Heart right ventricle (tissue), 16 donors: ENCODE measurements at regions of chr2 and their contacts with region 1.

Region 1: GRCh38 chr2:147888680-147889079 is 43.9 kb downstream of the ACVR2A start:
- DNase-seq: no peak
- ATAC-seq: no peak
- H3K4me3 ChIP-seq: no peak overlapping the region
- H3K27ac ChIP-seq: no peak overlapping the region
- H3K4me1 ChIP-seq: peaks cover 0 to 35% (median 17%) of the 10 kb centered on the region in 9 donors
- H3K27me3 ChIP-seq: no peaks in the 10 kb centered on the region
- CTCF ChIP-seq: no peak

Region 2: DNA sequence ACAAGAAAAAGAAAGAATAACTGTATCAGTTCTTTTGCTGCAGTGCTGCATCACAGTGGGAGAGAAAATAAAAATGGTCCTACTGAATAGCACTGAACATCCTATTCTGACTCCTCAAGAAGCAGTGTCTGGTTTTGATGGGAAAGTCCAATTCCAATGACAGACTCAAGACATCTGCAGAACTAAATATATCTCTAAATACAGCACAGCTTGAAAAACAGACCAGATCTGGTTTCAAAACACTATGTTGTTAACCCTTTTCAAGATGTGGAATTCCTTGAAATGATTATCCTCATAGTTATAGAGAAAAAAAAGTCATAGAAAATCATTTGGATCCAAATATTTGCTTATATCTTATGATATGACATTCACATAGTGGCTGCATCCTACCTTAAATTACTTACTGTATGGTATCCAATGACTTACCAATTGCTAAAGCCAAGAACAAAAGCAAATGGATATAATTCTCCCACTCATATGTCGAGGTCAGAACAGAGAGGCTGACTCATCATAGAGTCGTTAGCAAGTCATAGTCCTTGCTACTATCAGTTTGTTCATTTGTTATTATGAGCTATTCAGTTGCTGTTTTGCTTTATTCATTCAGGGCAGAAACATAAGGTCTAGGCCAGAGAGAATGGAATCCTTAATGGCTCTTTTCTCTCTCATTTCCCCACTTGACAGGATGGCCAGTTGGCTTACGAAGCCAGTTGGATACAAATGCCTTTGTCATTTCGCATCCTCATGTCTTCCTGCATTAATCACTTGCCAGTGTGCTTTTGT is 106.3 kb before region 1 on chr2:
- intact Hi-C with region 1: no loop called
- DNase-seq: no peak
- ATAC-seq: no peak
- H3K4me3 ChIP-seq: no peak overlapping the region
- H3K27ac ChIP-seq: no peak overlapping the region
- H3K4me1 ChIP-seq: no peaks in the 10 kb centered on the region
- H3K27me3 ChIP-seq: no peaks in the 10 kb centered on the region
- CTCF ChIP-seq: no peak

Region 3: GRCh38 chr2:147843864-147844696 is 44.6 kb before region 1 on chr2:
- intact Hi-C with region 1: loop called in 2 of 10 experiments (anchors 10 kb)
- DNase-seq: peak; percentile 92 to 94
- ATAC-seq: peak; percentile 92 to 98 (median 96)
- H3K4me3 ChIP-seq: peak overlapping the region; percentile 73 to 92 (median 84)
- H3K27ac ChIP-seq: peak overlapping the region; percentile 91 to 99 (median 97)
- H3K4me1 ChIP-seq: peaks cover 0 to 47% (median 32%) of the 10 kb centered on the region in 9 donors
- H3K27me3 ChIP-seq: peaks cover 0 to 9% (median 0%) of the 10 kb centered on the region in 7 donors
- CTCF ChIP-seq: peak in 6 of 9 donors; percentile 4 to 52 (median 42)

Region 4: DNA sequence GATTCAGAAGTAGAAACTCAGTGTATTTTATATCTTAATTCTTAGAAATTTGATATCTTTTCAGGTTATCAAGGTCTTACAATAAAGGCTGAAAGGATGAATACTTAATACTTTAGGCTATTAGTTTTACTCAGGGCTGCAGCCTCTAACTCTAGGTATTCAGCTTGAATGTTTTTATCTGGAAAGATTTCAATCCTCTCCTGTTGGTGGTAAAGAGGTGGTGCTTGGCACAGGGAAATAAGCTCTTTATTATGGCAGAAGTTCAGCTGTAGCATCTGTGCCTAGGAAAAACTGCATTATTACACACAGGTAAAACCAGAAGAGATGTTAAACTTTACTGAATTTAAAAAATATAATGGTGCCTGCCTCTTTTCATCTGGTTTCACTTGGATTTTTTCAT is 32.7 kb before region 1 on chr2:
- intact Hi-C with region 1: loop called in 1 of 10 experiments (anchors 5 kb)
- DNase-seq: no peak
- ATAC-seq: no peak
- H3K4me3 ChIP-seq: no peak overlapping the region
- H3K27ac ChIP-seq: no peak overlapping the region
- H3K4me1 ChIP-seq: peaks cover 0 to 67% (median 37%) of the 10 kb centered on the region in 9 donors
- H3K27me3 ChIP-seq: no peaks in the 10 kb centered on the region
- CTCF ChIP-seq: no peak

Region 5: DNA sequence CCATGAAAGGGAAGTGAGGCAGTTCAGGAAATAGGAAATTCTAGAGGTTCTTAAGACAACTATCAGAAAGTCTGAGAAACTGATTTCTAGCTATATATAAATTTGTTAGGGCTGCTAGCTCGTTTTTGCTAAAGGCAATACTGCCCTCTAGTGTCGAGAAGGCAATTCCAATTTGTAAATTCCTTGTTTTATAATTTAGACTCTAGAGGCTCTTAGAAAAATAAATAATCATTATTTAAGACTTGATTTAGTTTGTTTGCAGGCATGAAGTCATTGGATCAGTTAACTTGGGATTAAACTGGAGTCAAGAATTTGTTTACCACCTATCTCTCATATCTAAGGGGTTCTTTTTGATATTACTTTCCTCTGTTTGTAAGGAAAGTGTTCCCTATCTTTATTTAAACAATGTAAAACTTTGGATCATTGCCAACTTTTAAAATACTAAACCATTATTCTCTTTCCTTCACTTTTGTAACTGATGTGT is 22.4 kb after region 1 on chr2:
- intact Hi-C with region 1: no loop called
- DNase-seq: peak in 1 of 2 donors; percentile 47
- ATAC-seq: peak in 4 of 8 donors; percentile 20 to 49 (median 39)
- H3K4me3 ChIP-seq: no peak overlapping the region
- H3K27ac ChIP-seq: peak overlapping the region in 1 of 10 donors; percentile 23
- H3K4me1 ChIP-seq: peaks cover 0 to 27% (median 10%) of the 10 kb centered on the region in 9 donors
- H3K27me3 ChIP-seq: no peaks in the 10 kb centered on the region
- CTCF ChIP-seq: peak; percentile 69 to 91 (median 82)

Region 6: GRCh38 chr2:148042219-148042618 is 153.5 kb after region 1 on chr2:
- intact Hi-C with region 1: no loop called
- DNase-seq: no peak
- ATAC-seq: no peak
- H3K4me3 ChIP-seq: no peak overlapping the region
- H3K27ac ChIP-seq: no peak overlapping the region
- H3K4me1 ChIP-seq: peaks cover 0 to 13% (median 0%) of the 10 kb centered on the region in 9 donors
- H3K27me3 ChIP-seq: no peaks in the 10 kb centered on the region
- CTCF ChIP-seq: no peak